Dendritic cell treated with granulocyte-macrophage colony-stimulating factor and Interleukin-4, amounts not matched to agents 40 ng/mL and 50 ng/mL, for 4 days (primary cell): ENCODE measurements at regions of chr13 and their contacts with region 1.

Region 1: GRCh38 chr13:46052319-46053161 is at the start of gene ZC3H13:
- H3K4me3 Mint-ChIP-seq: peak within 1 kb of the TSS; percentile 99
- H3K27ac Mint-ChIP-seq: peak within 1 kb of the TSS; percentile 94
- H3K4me1 Mint-ChIP-seq: peaks cover 11% of the 10 kb centered on the region
- H3K27me3 Mint-ChIP-seq: peaks cover 5% of the 10 kb centered on the region

Region 2: GRCh38 chr13:46113596-46113995 is 61.1 kb after region 1 on chr13:
- intact Hi-C with region 1: loop called (anchors 5 kb)
- H3K4me3 Mint-ChIP-seq: no peak overlapping the region
- H3K27ac Mint-ChIP-seq: no peak overlapping the region
- H3K4me1 Mint-ChIP-seq: peaks cover 16% of the 10 kb centered on the region
- H3K27me3 Mint-ChIP-seq: peaks cover 2% of the 10 kb centered on the region

Region 3: GRCh38 chr13:46126552-46127357 is 74.2 kb after region 1 on chr13:
- intact Hi-C with region 1: loop called (anchors 5 kb)
- H3K4me3 Mint-ChIP-seq: no peak overlapping the region
- H3K27ac Mint-ChIP-seq: no peak overlapping the region
- H3K4me1 Mint-ChIP-seq: peaks cover 40% of the 10 kb centered on the region
- H3K27me3 Mint-ChIP-seq: peaks cover 2% of the 10 kb centered on the region